ENCODE measurements at regions of chr5 and their contacts with region 1.

Region 1: DNA sequence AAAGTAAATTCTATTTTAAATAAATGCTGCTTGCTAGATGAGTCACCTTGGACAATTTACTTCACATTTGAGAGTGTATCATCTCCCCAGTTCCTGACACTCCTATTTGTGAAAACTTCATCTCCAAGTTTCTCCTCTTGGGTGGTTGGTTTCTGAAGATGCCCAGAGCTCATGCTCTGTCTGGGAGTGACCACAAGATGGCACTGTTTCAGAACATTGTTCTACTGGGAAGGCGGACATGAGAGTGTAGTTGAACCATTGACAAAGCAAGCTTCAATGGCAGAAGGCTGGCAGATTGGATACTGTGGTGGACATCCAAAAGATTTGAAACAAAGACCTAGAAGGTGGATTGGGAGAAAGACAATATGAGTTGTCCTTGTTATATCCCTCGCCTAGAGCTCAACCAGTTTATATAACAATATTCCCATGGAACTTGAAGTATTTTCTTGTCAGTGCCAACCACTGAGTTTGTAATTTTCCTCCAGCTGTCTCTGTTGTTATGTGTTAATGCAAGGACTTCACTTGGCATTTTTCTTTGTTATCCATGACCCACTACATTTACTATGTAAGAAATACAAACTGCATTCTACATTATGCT is 234.3 kb upstream of the ANKH start:
- DNase-seq: no peak
- ATAC-seq: peak; percentile 74

Region 2: GRCh38 chr5:15819617-15820016 is 713.7 kb after region 1 on chr5:
- intact Hi-C with region 1: loop called (anchors 10 kb)
- DNase-seq: no peak
- ATAC-seq: no peak

Measured in left ventricle myocardium superior (tissue), 1 donor.